PC-9 (cell line): ENCODE measurements at regions of chr7 and their contacts with region 1.

Region 1: DNA sequence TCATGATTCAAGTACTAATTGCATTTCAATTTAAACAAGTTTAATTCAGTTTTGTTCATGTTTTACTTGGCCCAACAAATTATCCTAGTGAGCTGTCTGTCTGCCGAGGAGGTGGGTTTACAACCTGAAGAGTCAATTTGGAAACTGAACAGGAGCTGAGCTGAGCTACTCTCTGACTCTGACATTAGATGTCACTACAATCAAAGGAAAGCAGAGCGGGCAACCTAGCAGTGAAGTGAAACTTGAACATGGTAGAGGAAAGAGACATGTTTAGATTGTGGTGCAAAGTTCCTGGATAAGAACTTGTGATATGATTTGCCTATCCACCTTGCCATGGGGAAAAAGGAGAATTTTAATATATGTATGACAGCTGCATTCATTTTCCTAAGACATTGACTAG is 9.6 kb upstream of the AGR3 start:
- DNase-seq: peak; percentile 44 to 73
- H3K4me3 ChIP-seq: no peak overlapping the region
- H3K27ac ChIP-seq: no peak overlapping the region
- H3K4me1 ChIP-seq: peaks cover 15% of the 10 kb centered on the region
- H3K27me3 ChIP-seq: no peaks in the 10 kb centered on the region
- CTCF ChIP-seq: peak; percentile 84

Region 2: DNA sequence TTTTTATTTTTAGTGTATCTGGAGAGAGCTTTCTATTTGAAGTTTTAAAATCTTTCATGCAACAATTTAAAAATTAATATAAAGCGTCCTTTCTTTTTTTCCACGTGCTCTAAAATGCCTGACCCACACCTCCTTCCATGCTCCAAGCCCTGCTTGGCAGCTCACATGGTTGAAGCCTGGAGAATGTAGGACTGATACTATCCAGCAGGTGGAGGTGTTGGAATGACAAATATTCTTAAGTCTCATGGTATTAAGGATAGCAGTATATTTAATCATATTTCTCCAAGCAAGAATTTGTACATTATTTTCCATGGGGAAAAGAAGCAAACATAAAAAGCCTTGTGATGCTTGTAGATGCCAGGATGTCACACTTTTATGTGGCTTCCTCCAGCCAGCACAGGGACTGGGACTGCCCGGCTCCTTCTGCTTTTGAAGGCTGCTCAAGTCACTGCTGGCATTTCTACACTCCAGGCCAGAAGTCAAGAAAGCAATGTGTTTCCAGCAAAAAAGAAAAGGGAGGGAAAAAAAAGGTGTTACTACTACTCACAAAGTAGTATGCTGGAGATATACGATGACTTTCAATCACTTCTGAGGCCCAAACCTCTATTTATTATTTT is 195.6 kb before region 1 on chr7:
- CTCF ChIA-PET with region 1: interaction called, 5 read pairs
- POLR2A ChIA-PET with region 1: no interaction called
- intact Hi-C with region 1: loop called (anchors 1 kb)
- DNase-seq: peak; percentile 37 to 63
- H3K4me3 ChIP-seq: no peak overlapping the region
- H3K27ac ChIP-seq: no peak overlapping the region
- H3K4me1 ChIP-seq: no peaks in the 10 kb centered on the region
- H3K27me3 ChIP-seq: no peaks in the 10 kb centered on the region
- CTCF ChIP-seq: peak; percentile 89

Region 3: DNA sequence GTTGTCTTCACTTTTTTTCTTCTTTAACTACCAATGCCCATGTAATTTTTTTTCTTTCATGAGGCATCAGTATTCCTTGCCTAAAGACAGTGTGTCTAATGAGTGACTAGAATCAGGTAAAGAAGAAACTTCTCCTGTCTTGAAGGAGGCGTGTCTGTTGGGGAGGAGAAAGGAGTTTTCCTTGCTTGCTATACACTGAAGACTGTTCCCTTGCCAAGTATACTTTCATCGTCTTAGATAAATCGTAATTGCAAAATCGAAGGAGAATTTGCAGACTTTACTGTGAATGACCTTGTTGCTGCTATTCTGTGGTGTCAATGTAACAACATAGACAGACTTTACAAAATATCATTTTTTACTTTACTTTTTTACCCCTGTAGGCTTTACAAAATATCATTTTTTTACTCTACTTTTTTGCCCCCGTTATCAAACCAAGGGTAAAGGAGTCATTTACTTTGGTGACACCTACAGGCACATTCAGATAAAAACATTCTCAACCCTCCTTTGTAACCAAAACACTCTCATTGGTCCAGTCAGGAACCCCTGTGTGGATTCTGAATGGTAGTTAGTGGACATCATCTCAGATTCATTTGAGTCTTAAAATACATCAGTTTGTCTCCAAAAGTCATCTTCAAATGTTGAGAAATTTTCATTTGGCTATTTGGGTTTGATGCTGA is 639.5 kb after region 1 on chr7:
- CTCF ChIA-PET with region 1: no interaction called
- POLR2A ChIA-PET with region 1: no interaction called
- intact Hi-C with region 1: loop called (anchors 10 kb)
- DNase-seq: no peak
- H3K4me3 ChIP-seq: no peak overlapping the region
- H3K27ac ChIP-seq: no peak overlapping the region
- H3K4me1 ChIP-seq: peaks cover 20% of the 10 kb centered on the region
- H3K27me3 ChIP-seq: no peaks in the 10 kb centered on the region
- CTCF ChIP-seq: no peak

Region 4: GRCh38 chr7:17646253-17646956 is 755.1 kb after region 1 on chr7:
- CTCF ChIA-PET with region 1: no interaction called
- POLR2A ChIA-PET with region 1: no interaction called
- intact Hi-C with region 1: loop called (anchors 1 kb)
- DNase-seq: peak; percentile 4 to 43
- H3K4me3 ChIP-seq: no peak overlapping the region
- H3K27ac ChIP-seq: no peak overlapping the region
- H3K4me1 ChIP-seq: no peaks in the 10 kb centered on the region
- H3K27me3 ChIP-seq: no peaks in the 10 kb centered on the region
- CTCF ChIP-seq: peak; percentile 71

Region 5: GRCh38 chr7:17769918-17770317 is 878.6 kb after region 1 on chr7:
- CTCF ChIA-PET with region 1: no interaction called
- POLR2A ChIA-PET with region 1: no interaction called
- intact Hi-C with region 1: loop called (anchors 2 kb)
- DNase-seq: peak; percentile 57 to 71
- H3K4me3 ChIP-seq: no peak overlapping the region
- H3K27ac ChIP-seq: no peak overlapping the region
- H3K4me1 ChIP-seq: peaks cover 24% of the 10 kb centered on the region
- H3K27me3 ChIP-seq: no peaks in the 10 kb centered on the region
- CTCF ChIP-seq: peak; percentile 97

Region 6: DNA sequence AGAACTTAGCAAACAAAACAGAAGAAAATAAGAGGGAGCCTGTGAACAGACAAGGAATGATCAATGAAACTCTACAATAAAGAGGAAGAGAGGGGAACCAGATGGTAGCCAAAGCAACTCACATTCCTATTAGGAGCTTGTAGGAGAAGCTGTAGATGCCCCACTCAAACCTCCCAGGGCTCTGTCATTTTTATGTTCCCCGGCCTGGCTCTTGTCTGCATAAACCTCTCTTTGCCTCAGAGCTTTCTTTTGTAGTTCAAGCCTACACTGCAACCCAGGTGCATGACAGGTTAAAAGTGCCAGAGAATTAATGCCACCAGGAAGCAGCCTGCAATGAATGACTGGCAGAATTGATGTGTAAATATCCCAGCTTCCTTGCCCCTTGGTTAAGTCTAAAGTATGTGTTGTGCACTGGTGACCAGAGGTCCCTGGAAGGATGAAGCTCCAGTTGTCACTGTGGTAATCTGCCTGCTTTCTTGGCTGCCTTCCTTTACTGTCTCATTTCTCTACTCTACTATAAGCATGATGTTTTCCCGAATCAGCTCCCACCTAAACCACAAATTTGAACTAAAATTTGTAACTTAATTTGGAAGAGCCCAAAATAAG is 1644.6 kb after region 1 on chr7:
- CTCF ChIA-PET with region 1: no interaction called
- POLR2A ChIA-PET with region 1: interaction called, 19 read pairs
- intact Hi-C with region 1: no loop called
- DNase-seq: no peak
- H3K4me3 ChIP-seq: no peak overlapping the region
- H3K27ac ChIP-seq: no peak overlapping the region
- H3K4me1 ChIP-seq: no peaks in the 10 kb centered on the region; the same call in 1 of the 2 replicates
- H3K27me3 ChIP-seq: no peaks in the 10 kb centered on the region
- CTCF ChIP-seq: no peak